Aorta (tissue), 5 donors: ENCODE measurements at regions of chr2 and their contacts with region 1.

Region 1: GRCh38 chr2:237572021-237572741 is 5.8 kb downstream of the PRLH start:
- DNase-seq: peak; percentile 95 to 98
- ATAC-seq: peak; percentile 90
- H3K4me3 ChIP-seq: no peak overlapping the region
- H3K27ac ChIP-seq: no peak overlapping the region
- H3K4me1 ChIP-seq: no peaks in the 10 kb centered on the region
- H3K27me3 ChIP-seq: no peaks in the 10 kb centered on the region

Region 2: DNA sequence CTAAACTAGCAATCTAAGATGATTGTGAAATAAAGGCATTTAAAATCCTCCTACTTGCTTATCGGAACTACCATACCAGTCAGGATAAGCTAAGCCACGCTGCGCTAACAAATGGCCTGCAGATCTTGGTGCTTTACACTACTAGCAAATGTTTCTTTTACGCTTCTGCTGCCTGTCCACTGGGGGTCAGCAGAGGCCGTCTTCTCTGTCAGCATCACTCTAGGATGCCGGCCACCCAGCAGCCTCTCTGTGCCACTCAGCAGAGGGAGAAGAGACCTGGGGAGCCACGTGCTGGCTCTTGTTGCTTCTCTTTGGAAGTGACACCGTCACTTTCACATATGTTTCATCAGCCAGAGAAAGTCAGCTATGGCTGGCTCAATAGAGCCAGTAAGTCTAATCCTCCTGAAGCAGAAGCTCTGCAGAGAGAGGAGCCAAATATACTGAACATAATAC is 449.9 kb before region 1 on chr2:
- intact Hi-C with region 1: loop called in 1 of 2 experiments (anchors 2 kb)
- DNase-seq: peak; percentile 79 to 90
- ATAC-seq: peak; percentile 67
- H3K4me3 ChIP-seq: no peak overlapping the region
- H3K27ac ChIP-seq: no peak overlapping the region
- H3K4me1 ChIP-seq: no peaks in the 10 kb centered on the region
- H3K27me3 ChIP-seq: no peaks in the 10 kb centered on the region

Region 3: DNA sequence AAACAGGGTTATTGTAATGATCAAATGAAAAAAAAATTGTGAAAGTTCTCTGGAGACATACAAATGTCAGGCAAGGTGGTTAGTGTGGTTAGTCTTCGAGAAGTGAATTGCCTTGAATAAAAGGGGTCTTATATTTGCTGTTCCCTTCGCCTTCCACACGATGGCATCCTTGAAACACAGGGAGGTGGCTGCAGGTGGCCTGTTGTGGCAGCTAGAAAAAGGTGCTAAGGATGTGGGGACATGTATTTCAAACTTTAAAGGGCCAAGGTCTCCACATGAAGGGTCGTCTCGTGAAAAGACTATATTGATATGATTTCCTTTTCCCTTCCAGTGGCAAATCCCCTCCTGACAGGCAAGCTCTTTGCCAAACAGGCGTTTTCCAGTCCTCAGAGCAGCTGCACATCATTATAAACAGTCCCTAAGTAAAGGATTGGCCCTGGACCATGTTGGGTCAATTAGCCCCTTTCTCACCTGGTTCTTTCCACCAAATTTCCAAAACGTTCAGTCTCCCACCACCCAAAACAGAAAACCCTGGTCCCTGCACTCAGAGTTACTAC is 418.0 kb before region 1 on chr2:
- intact Hi-C with region 1: loop called (anchors 5 to 10 kb)
- DNase-seq: no peak
- ATAC-seq: no peak
- H3K4me3 ChIP-seq: no peak overlapping the region
- H3K27ac ChIP-seq: no peak overlapping the region
- H3K4me1 ChIP-seq: no peaks in the 10 kb centered on the region
- H3K27me3 ChIP-seq: no peaks in the 10 kb centered on the region

Region 4: GRCh38 chr2:237421542-237422116 is 150.6 kb before region 1 on chr2:
- intact Hi-C with region 1: loop called in 1 of 2 experiments (anchors 5 kb)
- DNase-seq: peak; percentile 86 to 95
- ATAC-seq: peak; percentile 91
- H3K4me3 ChIP-seq: no peak overlapping the region
- H3K27ac ChIP-seq: no peak overlapping the region
- H3K4me1 ChIP-seq: no peaks in the 10 kb centered on the region
- H3K27me3 ChIP-seq: no peaks in the 10 kb centered on the region

Region 5: GRCh38 chr2:237512774-237513466 is 59.3 kb before region 1 on chr2:
- intact Hi-C with region 1: loop called (anchors 2 kb)
- DNase-seq: peak; percentile 87 to 95
- ATAC-seq: peak; percentile 75
- H3K4me3 ChIP-seq: no peak overlapping the region
- H3K27ac ChIP-seq: no peak overlapping the region
- H3K4me1 ChIP-seq: no peaks in the 10 kb centered on the region
- H3K27me3 ChIP-seq: no peaks in the 10 kb centered on the region

Region 6: DNA sequence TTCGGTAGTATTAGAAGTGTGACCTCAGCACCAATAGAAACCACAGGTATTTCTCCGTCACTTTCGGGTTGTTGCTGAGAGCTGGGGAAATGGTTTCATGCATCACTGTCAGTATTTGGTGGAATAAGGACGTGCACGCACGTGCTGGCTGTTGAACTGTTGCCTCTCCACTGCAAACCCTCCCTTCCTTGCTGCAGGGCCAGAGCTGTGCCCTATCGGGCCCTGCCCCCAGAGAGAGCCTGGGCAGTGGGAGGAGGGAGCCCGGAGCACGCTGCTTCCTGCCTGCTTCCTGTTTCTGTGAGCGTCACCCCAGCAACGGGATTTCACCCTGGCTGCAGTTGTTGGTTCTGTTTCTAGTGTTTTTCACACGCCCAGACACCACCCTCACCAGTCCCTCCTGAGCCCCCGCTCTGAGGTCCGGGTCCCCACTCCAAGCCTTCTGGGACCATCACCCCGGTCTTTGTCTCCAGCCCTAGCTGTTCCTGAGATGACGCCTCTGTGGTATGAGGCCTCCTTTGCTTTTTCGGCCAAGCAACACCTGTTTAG is 102.6 kb after region 1 on chr2:
- intact Hi-C with region 1: no loop called
- DNase-seq: peak; percentile 93 to 95
- ATAC-seq: peak; percentile 89
- H3K4me3 ChIP-seq: peak overlapping the region in 1 of 2 donors; percentile 23
- H3K27ac ChIP-seq: peak overlapping the region; percentile 92 to 99
- H3K4me1 ChIP-seq: peaks cover 2 to 4% of the 10 kb centered on the region in 2 donors
- H3K27me3 ChIP-seq: no peaks in the 10 kb centered on the region

Region 7: DNA sequence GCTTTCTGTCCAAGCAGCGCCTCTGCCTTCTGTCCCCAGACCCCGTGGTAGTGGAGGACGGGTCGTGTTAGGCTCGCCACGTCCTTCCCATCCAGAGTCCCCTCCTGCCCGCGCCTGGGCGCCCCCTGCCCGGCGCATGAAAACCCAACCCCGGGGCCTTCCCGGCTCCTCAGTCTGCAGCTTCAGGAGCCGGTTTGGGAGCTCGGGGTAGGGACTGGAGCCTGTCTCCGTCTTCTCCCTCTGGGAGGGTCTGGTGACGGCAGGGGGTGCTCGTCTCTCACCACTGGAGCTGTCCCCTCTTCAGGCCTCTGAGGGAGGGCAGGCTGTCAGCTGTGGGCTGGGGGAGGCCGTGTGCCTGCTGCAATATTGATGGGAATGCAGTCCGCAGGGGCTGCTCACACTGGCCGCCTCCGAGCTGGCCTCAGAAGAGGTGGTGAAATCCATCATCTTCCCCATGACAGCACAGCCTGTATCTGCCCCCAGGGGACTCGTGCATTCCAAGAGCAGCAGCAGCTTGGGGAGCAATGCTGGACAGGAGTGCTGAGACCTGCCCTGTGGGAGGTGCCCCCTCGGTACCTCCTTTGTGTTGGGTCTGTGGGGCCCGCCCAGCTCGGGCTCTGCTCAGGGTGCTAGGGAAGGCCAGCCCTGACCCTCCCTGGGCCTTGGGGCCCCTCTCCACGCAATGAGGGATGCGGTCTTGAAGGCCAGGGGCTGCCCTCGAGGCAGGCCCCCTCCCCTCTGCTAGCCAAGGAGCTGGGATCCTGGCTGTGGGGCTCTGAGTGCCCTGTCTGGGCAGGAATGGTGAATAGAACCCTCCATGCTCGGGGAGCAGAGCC is 548.5 kb after region 1 on chr2:
- intact Hi-C with region 1: no loop called
- DNase-seq: peak in 1 of 2 donors; percentile 77
- ATAC-seq: no peak
- H3K4me3 ChIP-seq: no peak overlapping the region
- H3K27ac ChIP-seq: no peak overlapping the region
- H3K4me1 ChIP-seq: no peaks in the 10 kb centered on the region
- H3K27me3 ChIP-seq: no peaks in the 10 kb centered on the region

Region 8: GRCh38 chr2:238263204-238264071 is 691.3 kb after region 1 on chr2:
- intact Hi-C with region 1: no loop called
- DNase-seq: peak; percentile 95 to 97
- ATAC-seq: peak; percentile 89
- H3K4me3 ChIP-seq: no peak overlapping the region
- H3K27ac ChIP-seq: no peak overlapping the region
- H3K4me1 ChIP-seq: no peaks in the 10 kb centered on the region
- H3K27me3 ChIP-seq: no peaks in the 10 kb centered on the region